Activated CD8-positive, alpha-beta memory T cell treated with anti-CD3 and anti-CD28 coated beads, Interleukin-2, amount 10 ng/mL, durations not matched to agents 7 days and 5 days (primary cell): ENCODE measurements at regions of chr1 and their contacts with region 1.

Region 1: GRCh38 chr1:205591522-205592351 is 40.1 kb downstream of the ELK4 start:
- DNase-seq: peak; percentile 91
- ATAC-seq: peak; percentile 95
- H3K4me3 Mint-ChIP-seq: peak overlapping the region; percentile 82
- H3K27ac Mint-ChIP-seq: peak overlapping the region; percentile 85
- H3K4me1 Mint-ChIP-seq: peaks cover 26% of the 10 kb centered on the region
- H3K27me3 Mint-ChIP-seq: no peaks in the 10 kb centered on the region

Region 2: DNA sequence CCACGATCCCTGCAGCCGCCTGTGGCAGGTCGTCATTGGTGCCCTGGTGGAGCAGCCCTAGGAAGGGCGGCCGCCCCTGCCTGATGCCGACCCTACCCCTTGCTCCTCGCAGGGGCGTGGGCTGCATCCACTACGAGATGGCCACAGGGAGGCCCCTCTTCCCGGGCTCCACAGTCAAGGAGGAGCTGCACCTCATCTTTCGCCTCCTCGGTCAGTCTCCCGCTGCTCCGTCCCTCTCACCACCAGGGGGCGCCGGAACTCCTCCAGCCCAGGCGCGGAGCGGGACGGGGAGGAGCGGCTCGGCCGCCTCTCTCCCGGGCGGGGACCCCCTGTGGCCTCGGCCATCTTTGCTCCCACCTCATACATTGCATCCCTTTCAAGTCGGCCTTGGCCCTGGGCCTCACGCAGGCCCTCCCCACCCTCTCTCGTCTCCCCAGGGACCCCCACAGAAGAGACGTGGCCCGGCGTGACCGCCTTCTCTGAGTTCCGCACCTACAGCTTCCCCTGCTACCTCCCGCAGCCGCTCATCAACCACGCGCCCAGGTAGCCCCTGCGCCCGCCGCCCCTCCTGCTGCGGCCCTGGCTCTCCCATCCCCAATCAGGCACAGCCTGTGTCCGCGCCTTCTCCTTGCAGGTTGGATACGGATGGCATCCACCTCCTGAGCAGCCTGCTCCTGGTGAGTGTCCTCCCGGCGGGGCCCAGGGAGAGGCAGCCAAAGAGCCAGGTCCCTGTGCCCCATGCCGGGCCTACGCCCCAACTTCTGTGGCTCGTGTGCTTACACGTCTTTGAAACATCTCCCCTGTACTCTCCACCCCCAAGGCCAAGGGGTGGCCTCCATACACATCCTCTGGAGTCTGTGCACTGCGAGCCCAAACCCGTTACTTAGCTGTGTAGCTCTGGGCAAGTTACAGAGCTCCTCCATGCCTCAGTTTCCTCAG is 62.6 kb before region 1 on chr1:
- CTCF ChIA-PET with region 1: interaction called, 14 read pairs
- DNase-seq: peak; percentile 82
- ATAC-seq: peak; percentile 85
- H3K4me3 Mint-ChIP-seq: no peak overlapping the region
- H3K27ac Mint-ChIP-seq: no peak overlapping the region
- H3K4me1 Mint-ChIP-seq: peaks cover 3% of the 10 kb centered on the region
- H3K27me3 Mint-ChIP-seq: peaks cover 7% of the 10 kb centered on the region

Region 3: GRCh38 chr1:205623646-205624045 is 31.9 kb after region 1 on chr1:
- CTCF ChIA-PET with region 1: interaction called, 199 read pairs
- DNase-seq: no peak
- ATAC-seq: no peak
- H3K4me3 Mint-ChIP-seq: no peak overlapping the region
- H3K27ac Mint-ChIP-seq: no peak overlapping the region
- H3K4me1 Mint-ChIP-seq: peaks cover 39% of the 10 kb centered on the region
- H3K27me3 Mint-ChIP-seq: no peaks in the 10 kb centered on the region

Region 4: DNA sequence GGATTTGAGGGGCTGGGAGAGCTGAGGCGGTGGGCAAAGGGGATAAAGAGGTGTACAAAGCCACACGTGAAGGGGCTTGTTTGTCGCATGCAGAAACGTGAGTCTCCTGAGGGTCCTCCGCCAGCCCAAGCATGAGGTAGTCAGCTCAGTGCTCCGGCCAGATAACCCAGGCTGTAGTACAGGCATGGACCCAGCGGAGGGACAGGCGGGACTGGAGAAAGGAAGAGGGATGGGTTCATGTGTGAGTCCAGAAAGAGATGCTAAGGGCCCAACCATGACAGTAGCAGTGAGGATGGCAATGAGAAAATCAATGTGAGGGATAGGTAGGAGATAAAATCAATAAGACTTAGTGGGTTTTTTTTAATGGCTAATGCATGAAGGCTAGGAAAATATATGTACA is 53.8 kb after region 1 on chr1:
- CTCF ChIA-PET with region 1: interaction called, 11 read pairs
- DNase-seq: no peak
- ATAC-seq: no peak
- H3K4me3 Mint-ChIP-seq: no peak overlapping the region
- H3K27ac Mint-ChIP-seq: no peak overlapping the region
- H3K4me1 Mint-ChIP-seq: no peaks in the 10 kb centered on the region
- H3K27me3 Mint-ChIP-seq: peaks cover 9% of the 10 kb centered on the region

Region 5: GRCh38 chr1:205711104-205712020 is 119.6 kb after region 1 on chr1:
- CTCF ChIA-PET with region 1: interaction called, 20 read pairs
- DNase-seq: peak; percentile 70
- ATAC-seq: peak; percentile 94
- H3K4me3 Mint-ChIP-seq: no peak overlapping the region
- H3K27ac Mint-ChIP-seq: peak overlapping the region; percentile 59
- H3K4me1 Mint-ChIP-seq: peaks cover 7% of the 10 kb centered on the region
- H3K27me3 Mint-ChIP-seq: no peaks in the 10 kb centered on the region